ENCODE measurements at regions of chr12 and their contacts with region 1.

Region 1: GRCh38 chr12:26748741-26749431 is 84.1 kb downstream of the ITPR2 start:
- DNase-seq: no peak
- H3K4me3 Mint-ChIP-seq: peak overlapping the region; percentile 12
- H3K27ac Mint-ChIP-seq: peak overlapping the region; percentile 88
- H3K4me1 Mint-ChIP-seq: peaks cover 64% of the 10 kb centered on the region
- H3K27me3 Mint-ChIP-seq: no peaks in the 10 kb centered on the region

Region 2: GRCh38 chr12:24902511-24903328 is 1846.2 kb before region 1 on chr12:
- CTCF ChIA-PET with region 1: no interaction called
- intact Hi-C with region 1: loop called (anchors 2 kb)
- DNase-seq: peak; percentile 23
- H3K4me3 Mint-ChIP-seq: peak overlapping the region; percentile 85
- H3K27ac Mint-ChIP-seq: peak overlapping the region; percentile 71
- H3K4me1 Mint-ChIP-seq: peaks cover 31% of the 10 kb centered on the region
- H3K27me3 Mint-ChIP-seq: peaks cover 28% of the 10 kb centered on the region

Region 3: DNA sequence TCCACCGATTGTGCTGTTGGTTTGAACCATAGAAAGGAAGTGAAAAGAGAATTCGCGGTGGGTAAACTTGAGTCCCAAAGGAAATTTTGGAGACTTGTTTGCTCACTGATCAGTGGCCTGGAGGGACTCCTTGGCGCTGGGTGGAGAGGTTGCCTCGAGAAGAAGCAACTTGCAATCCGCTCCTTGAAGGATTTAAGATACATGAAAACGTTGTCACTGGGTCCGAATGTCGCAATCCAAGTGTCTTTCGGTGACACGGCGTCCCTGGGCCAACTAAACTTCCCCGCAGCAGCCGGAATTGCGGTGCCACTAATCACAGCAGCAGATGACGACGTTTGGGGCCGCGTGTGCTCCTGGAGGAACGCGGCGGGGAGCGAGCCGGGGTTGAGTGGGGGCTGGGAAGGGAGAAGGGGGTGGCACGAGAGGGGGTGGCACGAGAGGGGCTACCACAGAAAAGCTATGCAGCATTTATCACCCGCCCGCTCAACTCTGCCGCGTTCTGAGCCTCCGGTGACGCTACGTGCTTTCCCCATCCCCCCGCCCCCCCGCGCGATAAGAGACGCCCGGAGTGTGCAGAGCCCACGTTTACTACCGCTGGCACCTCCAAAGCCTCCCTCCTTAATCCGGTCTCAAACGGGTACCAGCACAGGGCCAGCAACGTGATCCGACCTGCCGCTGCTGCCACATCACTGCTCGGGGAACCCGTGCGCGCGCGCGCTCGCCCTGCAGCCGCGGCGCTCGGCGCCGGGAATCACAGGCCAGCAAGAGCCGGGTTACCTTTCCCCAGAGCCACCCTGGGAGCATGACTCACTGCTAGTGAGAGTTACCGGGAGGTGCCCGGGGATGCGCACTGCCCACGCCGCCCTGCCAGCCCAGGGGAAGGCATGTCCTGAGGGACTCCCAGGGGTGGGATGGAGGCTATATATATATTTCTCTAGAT is 623.2 kb before region 1 on chr12:
- CTCF ChIA-PET with region 1: no interaction called
- intact Hi-C with region 1: loop called (anchors 2 kb)
- DNase-seq: peak; percentile 53
- H3K4me3 Mint-ChIP-seq: peak overlapping the region; percentile 82
- H3K27ac Mint-ChIP-seq: no peak overlapping the region
- H3K4me1 Mint-ChIP-seq: peaks cover 23% of the 10 kb centered on the region
- H3K27me3 Mint-ChIP-seq: peaks cover 69% of the 10 kb centered on the region

Region 4: GRCh38 chr12:26680727-26681455 is 68.0 kb before region 1 on chr12:
- CTCF ChIA-PET with region 1: no interaction called
- intact Hi-C with region 1: no loop called
- DNase-seq: no peak
- H3K4me3 Mint-ChIP-seq: no peak overlapping the region
- H3K27ac Mint-ChIP-seq: no peak overlapping the region
- H3K4me1 Mint-ChIP-seq: no peaks in the 10 kb centered on the region
- H3K27me3 Mint-ChIP-seq: no peaks in the 10 kb centered on the region

Region 5: GRCh38 chr12:26808766-26809476 is 60.0 kb after region 1 on chr12:
- CTCF ChIA-PET with region 1: interaction called, 4 read pairs
- intact Hi-C with region 1: loop called (anchors 1 kb)
- DNase-seq: no peak
- H3K4me3 Mint-ChIP-seq: no peak overlapping the region
- H3K27ac Mint-ChIP-seq: peak overlapping the region; percentile 58
- H3K4me1 Mint-ChIP-seq: peaks cover 41% of the 10 kb centered on the region
- H3K27me3 Mint-ChIP-seq: no peaks in the 10 kb centered on the region

Region 6: GRCh38 chr12:27179400-27180214 is 430.7 kb after region 1 on chr12:
- CTCF ChIA-PET with region 1: no interaction called
- intact Hi-C with region 1: loop called (anchors 2 kb)
- DNase-seq: peak; percentile 69
- H3K4me3 Mint-ChIP-seq: no peak overlapping the region
- H3K27ac Mint-ChIP-seq: peak overlapping the region; percentile 76
- H3K4me1 Mint-ChIP-seq: peaks cover 38% of the 10 kb centered on the region
- H3K27me3 Mint-ChIP-seq: peaks cover 2% of the 10 kb centered on the region

Region 7: GRCh38 chr12:27462151-27462694 is 713.3 kb after region 1 on chr12:
- CTCF ChIA-PET with region 1: no interaction called
- intact Hi-C with region 1: loop called (anchors 2 kb)
- DNase-seq: peak; percentile 59
- H3K4me3 Mint-ChIP-seq: no peak overlapping the region
- H3K27ac Mint-ChIP-seq: peak overlapping the region; percentile 72
- H3K4me1 Mint-ChIP-seq: peaks cover 58% of the 10 kb centered on the region
- H3K27me3 Mint-ChIP-seq: no peaks in the 10 kb centered on the region

Measured in activated naive CD4-positive, alpha-beta T cell treated with anti-CD3 and anti-CD28 coated beads for 36 hours (primary cell).